Prostate gland (tissue), 2 donors: ENCODE measurements at regions of chr2 and their contacts with region 1.

Region 1: GRCh38 chr2:236576087-236576486 is 6.5 kb downstream of the ACKR3 start:
- DNase-seq: no peak
- H3K4me3 ChIP-seq: no peak overlapping the region
- H3K27ac ChIP-seq: no peak overlapping the region
- H3K4me1 ChIP-seq: no peaks in the 10 kb centered on the region
- H3K27me3 ChIP-seq: no peaks in the 10 kb centered on the region
- CTCF ChIP-seq: no peak
- POLR2A ChIP-seq: no peak

Region 2: GRCh38 chr2:236642584-236643291 is 66.7 kb after region 1 on chr2:
- intact Hi-C with region 1: loop called (anchors 5 kb)
- DNase-seq: no peak
- H3K4me3 ChIP-seq: no peak overlapping the region
- H3K27ac ChIP-seq: peak overlapping the region in 1 of 2 donors; percentile 9
- H3K4me1 ChIP-seq: no peaks in the 10 kb centered on the region
- H3K27me3 ChIP-seq: no peaks in the 10 kb centered on the region
- CTCF ChIP-seq: no peak
- POLR2A ChIP-seq: no peak

Region 3: GRCh38 chr2:236745420-236746197 is 169.5 kb after region 1 on chr2:
- intact Hi-C with region 1: loop called (anchors 10 kb)
- DNase-seq: peak; percentile 65
- H3K4me3 ChIP-seq: no peak overlapping the region
- H3K27ac ChIP-seq: no peak overlapping the region
- H3K4me1 ChIP-seq: no peaks in the 10 kb centered on the region
- H3K27me3 ChIP-seq: no peaks in the 10 kb centered on the region
- CTCF ChIP-seq: peak in 1 of 4 experiments; percentile 15
- POLR2A ChIP-seq: no peak